Gastrocnemius medialis (tissue), 4 donors: ENCODE measurements at regions of chr18 and their contacts with region 1.

Region 1: GRCh38 chr18:46281185-46282176 is 177.3 kb downstream of the HAUS1 start:
- DNase-seq: peak; percentile 22 to 52
- ATAC-seq: peak; percentile 58 to 83
- H3K4me3 ChIP-seq: no peak overlapping the region
- H3K27ac ChIP-seq: no peak overlapping the region
- H3K4me1 ChIP-seq: peaks cover 22 to 40% of the 10 kb centered on the region in 2 donors
- H3K27me3 ChIP-seq: no peaks in the 10 kb centered on the region
- CTCF ChIP-seq: peak; percentile 78 to 93 (median 83)
- POLR2A ChIP-seq: no peak

Region 2: GRCh38 chr18:46097801-46098615 is 183.5 kb before region 1 on chr18 and contains the start of gene ATP5F1A:
- in situ Hi-C with region 1: no loop called
- intact Hi-C with region 1: no loop called
- DNase-seq: peak; percentile 86 to 91
- ATAC-seq: peak; percentile 89 to 91
- H3K4me3 ChIP-seq: peak within 1 kb of the TSS; percentile 83 to 100 (median 90)
- H3K27ac ChIP-seq: peak within 1 kb of the TSS; percentile 92 to 97 (median 94)
- H3K4me1 ChIP-seq: peaks cover 31 to 37% of the 10 kb centered on the region in 2 donors
- H3K27me3 ChIP-seq: no peaks in the 10 kb centered on the region
- CTCF ChIP-seq: no peak
- POLR2A ChIP-seq: peak; percentile 90 to 93
- total RNA-seq, gene ATP5F1A: 845 to 1,536 (median 877) TPM

Region 3: DNA sequence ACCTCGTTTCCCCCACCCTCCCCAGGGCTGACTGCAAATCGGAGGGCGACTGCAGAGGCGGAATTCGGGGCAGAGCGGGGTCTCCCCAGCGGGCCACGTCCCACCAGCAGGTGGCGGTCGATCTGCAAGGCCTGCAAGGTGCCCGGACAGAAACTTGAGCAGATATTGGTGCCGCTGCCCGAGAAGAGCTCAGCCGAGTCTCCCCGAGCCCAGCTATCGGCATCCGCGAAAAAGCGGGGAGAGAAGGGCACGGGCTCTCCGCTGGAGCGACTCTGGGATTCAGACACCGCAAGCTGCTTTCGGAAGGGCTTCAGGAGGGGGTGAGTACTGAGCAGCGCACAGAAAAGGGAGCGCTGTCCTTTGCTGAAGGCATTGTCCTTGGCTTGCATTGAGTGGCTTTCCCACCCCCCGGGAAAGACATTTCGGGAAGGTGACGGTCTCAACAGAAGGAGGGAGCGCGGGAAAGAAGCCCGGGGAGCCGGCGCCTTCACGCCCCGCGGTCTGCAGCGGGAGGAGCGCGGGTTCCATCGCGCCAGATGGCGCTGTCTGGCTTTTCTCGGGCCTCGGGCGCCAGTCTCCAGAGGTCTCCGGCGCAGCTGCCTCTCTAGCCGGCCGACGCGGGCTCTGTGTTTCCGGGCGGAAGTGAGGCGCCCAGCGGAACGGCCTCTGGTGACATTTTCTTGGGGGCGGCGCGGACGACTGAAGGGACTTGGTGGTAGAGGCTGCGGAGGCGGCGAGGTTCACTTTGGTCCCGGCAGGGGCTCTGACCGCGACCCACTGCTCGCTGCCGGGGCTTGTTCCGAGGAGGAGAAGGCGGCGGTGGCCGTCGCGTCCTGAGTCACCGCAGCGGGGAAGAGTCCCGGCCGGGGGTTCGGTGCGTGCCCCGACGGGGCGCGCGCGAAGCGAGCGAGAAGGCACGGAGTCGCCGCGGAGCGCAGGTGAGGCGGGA is 107.8 kb before region 1 on chr18:
- in situ Hi-C with region 1: no loop called
- intact Hi-C with region 1: loop called (anchors 5 kb)
- DNase-seq: peak; percentile 86 to 91
- ATAC-seq: peak; percentile 84 to 88
- H3K4me3 ChIP-seq: peak overlapping the region; percentile 96 to 100 (median 98)
- H3K27ac ChIP-seq: peak overlapping the region; percentile 95 to 100 (median 98)
- H3K4me1 ChIP-seq: peaks cover 27 to 35% of the 10 kb centered on the region in 2 donors
- H3K27me3 ChIP-seq: no peaks in the 10 kb centered on the region
- CTCF ChIP-seq: peak; percentile 81 to 91 (median 89)
- POLR2A ChIP-seq: peak; percentile 71 to 87

Region 4: DNA sequence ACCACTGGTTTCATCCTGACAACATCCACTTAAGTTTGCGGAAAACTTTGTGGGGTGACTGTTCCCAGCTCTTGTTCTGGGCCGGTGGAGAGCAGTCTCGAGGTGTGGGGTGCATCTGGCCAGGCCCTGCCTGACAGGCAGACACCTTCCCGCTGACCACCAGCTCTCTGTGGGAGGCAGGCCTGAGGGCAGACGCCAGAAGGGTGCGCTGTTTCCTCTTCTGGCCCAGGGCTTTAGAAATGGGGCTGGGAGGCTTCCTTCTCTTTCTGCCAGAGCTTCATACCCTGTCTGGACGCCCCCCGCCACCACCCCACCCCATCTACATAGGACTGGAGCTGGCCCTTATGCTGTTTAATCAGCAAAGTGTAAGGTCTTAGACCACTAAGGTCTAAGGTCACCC is 111.7 kb after region 1 on chr18:
- in situ Hi-C with region 1: loop called in 1 of 4 experiments (anchors 25 kb)
- intact Hi-C with region 1: no loop called
- DNase-seq: no peak
- ATAC-seq: no peak
- H3K4me3 ChIP-seq: no peak overlapping the region
- H3K27ac ChIP-seq: no peak overlapping the region
- H3K4me1 ChIP-seq: peaks cover 4 to 16% of the 10 kb centered on the region in 2 donors
- H3K27me3 ChIP-seq: no peaks in the 10 kb centered on the region
- CTCF ChIP-seq: no peak
- POLR2A ChIP-seq: no peak

Region 5: DNA sequence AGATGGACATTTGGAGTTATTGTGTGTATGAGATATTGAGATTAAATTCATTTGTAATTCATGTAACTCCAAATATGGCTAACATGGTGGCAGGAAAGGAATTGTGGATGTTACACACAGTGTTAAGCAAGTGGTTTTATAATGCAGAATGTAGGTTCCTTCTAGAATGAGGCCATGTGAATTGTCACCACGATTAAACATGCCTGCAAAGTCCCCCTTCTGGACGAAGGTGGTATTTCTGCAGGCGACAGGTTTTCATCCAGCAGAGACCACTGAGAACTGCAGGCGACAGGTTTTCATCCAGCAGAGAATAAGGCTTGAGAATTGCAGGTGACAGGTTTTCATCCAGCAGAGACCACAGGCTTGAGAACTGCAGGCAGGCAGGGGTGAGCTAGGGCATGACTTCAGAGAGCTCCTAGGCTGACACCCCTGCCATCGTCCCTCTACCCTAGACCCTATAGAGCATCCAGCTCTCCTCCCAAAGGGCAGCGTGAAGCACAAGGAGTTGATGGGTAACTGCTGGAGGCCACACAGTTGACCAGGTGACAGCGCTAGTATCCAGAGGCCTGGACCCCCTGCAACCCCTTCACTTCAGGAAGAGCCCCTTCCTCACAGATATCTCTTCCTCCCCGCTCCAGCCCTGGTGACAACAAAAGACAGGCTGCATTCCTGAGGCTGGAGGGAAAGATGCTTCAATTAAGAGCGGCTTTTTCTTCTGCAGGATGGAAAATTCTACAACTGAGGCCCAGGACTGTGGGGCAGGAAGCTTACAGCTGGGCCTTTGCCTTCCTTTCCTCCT is 199.8 kb after region 1 on chr18:
- in situ Hi-C with region 1: loop called in 3 of 4 experiments (anchors 25 kb)
- intact Hi-C with region 1: loop called (anchors 1 kb)
- DNase-seq: peak in 1 of 2 donors; percentile 32
- ATAC-seq: peak in 1 of 2 donors; percentile 76
- H3K4me3 ChIP-seq: no peak overlapping the region
- H3K27ac ChIP-seq: no peak overlapping the region
- H3K4me1 ChIP-seq: no peaks in the 10 kb centered on the region
- H3K27me3 ChIP-seq: no peaks in the 10 kb centered on the region
- CTCF ChIP-seq: peak; percentile 48 to 74 (median 63)
- POLR2A ChIP-seq: no peak

Region 6: DNA sequence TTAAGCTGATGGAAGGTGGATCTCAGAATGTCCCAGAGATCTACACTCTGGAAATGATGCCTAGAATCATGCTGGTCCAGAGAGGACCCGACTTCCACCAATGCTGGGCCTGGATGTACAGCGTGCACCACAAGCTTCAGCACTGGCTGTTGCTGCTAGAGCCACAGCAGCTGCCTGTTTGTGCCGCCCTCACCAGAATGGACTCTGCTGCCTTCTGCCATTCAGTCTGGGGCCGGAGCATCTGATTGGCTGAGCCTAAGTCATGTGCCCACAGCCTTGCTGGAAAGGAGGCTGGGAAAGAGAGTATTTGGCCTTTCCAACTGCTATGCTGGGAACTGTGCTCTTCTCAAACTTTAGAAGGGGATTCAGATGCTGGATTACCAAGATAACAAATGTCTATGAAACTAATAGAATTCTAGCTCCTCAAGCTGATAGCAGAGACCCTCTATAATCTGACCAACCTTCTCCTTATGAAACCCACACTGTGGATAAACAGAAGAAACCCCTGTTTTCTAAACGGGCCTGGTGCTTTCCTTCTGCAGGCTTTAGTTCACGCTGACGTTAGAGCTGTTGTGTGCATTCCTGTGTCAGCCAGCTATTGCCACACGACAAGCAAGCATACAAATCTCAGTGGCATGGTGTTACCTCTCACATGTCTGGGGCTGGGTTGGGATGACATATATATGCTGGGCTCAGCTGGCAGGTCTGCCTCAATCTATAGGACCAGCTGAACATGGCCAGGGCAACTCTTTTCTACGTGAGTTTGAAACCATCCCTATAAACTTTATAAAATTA is 379.7 kb after region 1 on chr18:
- in situ Hi-C with region 1: loop called (anchors 10 to 25 kb)
- intact Hi-C with region 1: loop called (anchors 1 kb)
- DNase-seq: peak in 1 of 2 donors; percentile 28
- ATAC-seq: peak; percentile 57 to 67
- H3K4me3 ChIP-seq: no peak overlapping the region
- H3K27ac ChIP-seq: peak overlapping the region in 1 of 4 donors; percentile 8
- H3K4me1 ChIP-seq: peaks cover 0 to 4% of the 10 kb centered on the region in 2 donors
- H3K27me3 ChIP-seq: no peaks in the 10 kb centered on the region
- CTCF ChIP-seq: no peak
- POLR2A ChIP-seq: no peak

Region 7: DNA sequence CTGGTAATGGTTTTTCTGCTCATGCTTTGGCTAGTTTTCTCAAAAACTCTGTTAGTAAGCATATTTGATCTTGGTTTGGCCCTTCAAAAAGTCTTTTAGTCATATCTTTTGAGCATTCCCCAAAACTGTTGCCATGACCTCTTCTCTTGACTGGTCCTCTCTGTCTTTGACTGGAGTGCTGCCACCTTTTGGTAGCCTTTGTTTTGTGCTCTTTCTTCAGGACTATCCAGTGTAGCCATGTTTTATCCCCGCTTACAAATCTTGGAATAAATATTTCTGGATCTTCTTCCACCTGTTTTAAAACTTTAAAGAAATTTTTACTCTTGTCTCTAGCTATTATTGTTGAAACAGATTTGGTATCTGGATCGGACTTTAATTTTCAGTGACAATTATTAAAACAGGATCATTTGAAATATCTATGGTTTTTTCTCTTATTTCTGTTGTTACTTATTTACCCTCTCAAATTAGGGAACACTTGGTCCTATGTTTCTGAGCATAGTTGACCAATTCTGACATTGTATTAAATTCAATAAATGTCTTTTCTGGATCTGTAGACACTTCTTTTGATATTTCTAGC is 754.9 kb after region 1 on chr18:
- in situ Hi-C with region 1: no loop called
- intact Hi-C with region 1: no loop called
- DNase-seq: no peak
- ATAC-seq: no peak
- H3K4me3 ChIP-seq: no peak overlapping the region
- H3K27ac ChIP-seq: no peak overlapping the region
- H3K4me1 ChIP-seq: no peaks in the 10 kb centered on the region
- H3K27me3 ChIP-seq: no peaks in the 10 kb centered on the region
- CTCF ChIP-seq: peak in 3 of 5 experiments; percentile 5 to 37 (median 16)
- POLR2A ChIP-seq: no peak